ENCODE measurements at regions of chr5 and their contacts with region 1.

Region 1: GRCh38 chr5:56918054-56918453 is 8.7 kb downstream of the SETD9 start:
- DNase-seq: no peak
- H3K4me3 ChIP-seq: no peak overlapping the region
- H3K4me3 Mint-ChIP-seq: no peak overlapping the region
- H3K27ac ChIP-seq: no peak overlapping the region
- H3K27ac Mint-ChIP-seq: peak overlapping the region in 1 of 7 donors; percentile 59
- H3K4me1 ChIP-seq: no peaks in the 10 kb centered on the region
- H3K4me1 Mint-ChIP-seq: peaks cover 0 to 3% (median 1%) of the 10 kb centered on the region in 4 donors
- H3K27me3 ChIP-seq: no peaks in the 10 kb centered on the region
- H3K27me3 Mint-ChIP-seq: no peaks in the 10 kb centered on the region

Region 2: GRCh38 chr5:56746553-56747339 is 171.3 kb before region 1 on chr5:
- CTCF ChIA-PET with region 1: no interaction called
- POLR2A ChIA-PET with region 1: no interaction called
- intact Hi-C with region 1: no loop called
- DNase-seq: no peak
- H3K4me3 ChIP-seq: no peak overlapping the region
- H3K4me3 Mint-ChIP-seq: no peak overlapping the region
- H3K27ac ChIP-seq: no peak overlapping the region
- H3K27ac Mint-ChIP-seq: no peak overlapping the region
- H3K4me1 ChIP-seq: no peaks in the 10 kb centered on the region
- H3K4me1 Mint-ChIP-seq: no peaks in the 10 kb centered on the region
- H3K27me3 ChIP-seq: no peaks in the 10 kb centered on the region
- H3K27me3 Mint-ChIP-seq: no peaks in the 10 kb centered on the region

Region 3: DNA sequence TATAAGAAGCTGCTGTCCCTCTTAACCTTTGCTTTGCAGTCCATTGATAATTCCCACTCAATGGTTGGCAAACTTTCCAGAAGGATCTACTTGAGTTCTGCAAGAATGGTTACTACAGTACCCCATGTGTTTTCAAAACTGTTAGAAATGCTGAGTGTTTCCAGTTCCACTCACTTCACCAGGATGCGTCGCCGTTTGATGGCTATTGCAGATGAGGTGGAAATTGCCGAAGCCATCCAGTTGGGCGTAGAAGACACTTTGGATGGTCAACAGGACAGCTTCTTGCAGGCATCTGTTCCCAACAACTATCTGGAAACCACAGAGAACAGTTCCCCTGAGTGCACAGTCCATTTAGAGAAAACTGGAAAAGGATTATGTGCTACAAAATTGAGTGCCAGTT is 36.5 kb before region 1 on chr5:
- CTCF ChIA-PET with region 1: no interaction called
- POLR2A ChIA-PET with region 1: no interaction called
- intact Hi-C with region 1: no loop called
- DNase-seq: no peak
- H3K4me3 ChIP-seq: no peak overlapping the region
- H3K4me3 Mint-ChIP-seq: no peak overlapping the region
- H3K27ac ChIP-seq: no peak overlapping the region
- H3K27ac Mint-ChIP-seq: peak overlapping the region in 2 of 7 donors; percentile 38 to 43
- H3K4me1 ChIP-seq: peaks cover 13% of the 10 kb centered on the region
- H3K4me1 Mint-ChIP-seq: peaks cover 11 to 34% (median 23%) of the 10 kb centered on the region in 4 donors
- H3K27me3 ChIP-seq: no peaks in the 10 kb centered on the region
- H3K27me3 Mint-ChIP-seq: no peaks in the 10 kb centered on the region

Region 4: GRCh38 chr5:56900858-56901578 is 17.0 kb before region 1 on chr5:
- CTCF ChIA-PET with region 1: interaction called, 13 read pairs
- POLR2A ChIA-PET with region 1: no interaction called
- intact Hi-C with region 1: no loop called
- DNase-seq: peak in 4 of 5 donors; percentile 43 to 64 (median 54)
- H3K4me3 ChIP-seq: no peak overlapping the region
- H3K4me3 Mint-ChIP-seq: no peak overlapping the region
- H3K27ac ChIP-seq: no peak overlapping the region
- H3K27ac Mint-ChIP-seq: no peak overlapping the region
- H3K4me1 ChIP-seq: no peaks in the 10 kb centered on the region
- H3K4me1 Mint-ChIP-seq: peaks cover 2 to 6% (median 4%) of the 10 kb centered on the region in 4 donors
- H3K27me3 ChIP-seq: no peaks in the 10 kb centered on the region
- H3K27me3 Mint-ChIP-seq: no peaks in the 10 kb centered on the region

Measured in CD4-positive, alpha-beta memory T cell (primary cell).